AG04449 (cell line): ENCODE measurements at regions of chr15 and their contacts with region 1.

Region 1: GRCh38 chr15:32994810-32995424 is 199.6 kb downstream of the FMN1 start:
- DNase-seq: no peak
- H3K4me3 ChIP-seq: no peak overlapping the region
- CTCF ChIP-seq: peak; percentile 22

Region 2: GRCh38 chr15:32657198-32657883 is 337.6 kb before region 1 on chr15:
- CTCF ChIA-PET with region 1: interaction called, 150 read pairs
- POLR2A ChIA-PET with region 1: no interaction called
- DNase-seq: no peak
- H3K4me3 ChIP-seq: no peak overlapping the region
- CTCF ChIP-seq: no peak

Region 3: DNA sequence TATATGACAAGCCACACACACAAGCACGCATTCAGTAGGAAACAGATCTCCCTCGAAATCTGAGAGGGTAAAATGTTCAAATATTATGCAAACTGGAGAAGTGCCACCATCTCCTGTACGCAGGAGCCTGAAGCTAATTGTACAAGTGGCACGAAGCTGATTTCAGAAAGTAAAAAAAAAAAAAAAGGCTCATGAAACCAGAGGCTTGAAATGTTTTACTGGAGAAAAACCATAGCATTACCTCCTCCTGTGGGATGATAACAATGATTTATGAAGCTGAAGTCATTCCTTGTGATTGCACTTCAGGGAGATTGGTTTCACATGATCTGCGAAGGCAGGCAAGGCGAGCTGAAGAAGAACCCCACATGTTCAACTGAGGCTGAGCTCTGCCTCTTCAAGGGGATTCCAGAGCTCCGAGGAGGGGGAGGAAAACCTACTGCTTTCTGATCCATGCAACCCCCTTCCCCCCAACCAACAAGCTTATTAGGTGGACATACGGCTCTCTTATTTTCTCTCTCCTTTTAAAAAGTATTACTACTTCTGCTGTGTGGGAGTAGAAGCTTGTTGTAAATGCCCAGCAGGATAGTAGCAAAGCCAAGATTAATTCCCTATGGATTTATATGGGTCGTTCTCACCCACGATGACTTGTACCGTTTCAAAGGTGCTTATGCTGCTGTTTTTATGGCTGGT is 176.0 kb before region 1 on chr15:
- CTCF ChIA-PET with region 1: interaction called, 18 read pairs
- POLR2A ChIA-PET with region 1: no interaction called
- DNase-seq: peak; percentile 89
- H3K4me3 ChIP-seq: peak overlapping the region; percentile 16; the same call in 1 of the 2 replicates
- CTCF ChIP-seq: no peak

Region 4: DNA sequence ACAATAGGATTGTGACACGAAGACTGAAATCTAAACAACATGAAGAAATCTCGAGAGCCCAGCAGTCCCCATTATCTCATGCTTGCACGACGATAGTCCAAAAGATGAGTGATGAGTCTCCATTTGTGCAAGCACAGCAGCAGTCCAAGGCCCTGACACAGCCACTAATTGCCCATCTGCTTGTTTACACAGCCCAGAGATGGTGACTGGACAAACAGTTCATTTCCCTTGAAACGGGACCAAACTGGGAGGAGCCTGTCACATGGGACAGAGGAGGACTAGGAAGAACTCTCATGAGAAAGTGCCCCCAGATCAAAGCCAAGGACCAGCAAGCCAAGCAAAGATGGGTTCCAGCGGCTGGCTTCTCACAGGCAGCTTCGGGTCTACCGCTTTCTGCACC is 156.1 kb before region 1 on chr15:
- CTCF ChIA-PET with region 1: interaction called, 92 read pairs
- POLR2A ChIA-PET with region 1: interaction called, 3 read pairs
- DNase-seq: peak; percentile 88
- H3K4me3 ChIP-seq: peak overlapping the region; percentile 40
- CTCF ChIP-seq: no peak

Region 5: GRCh38 chr15:32979710-32980109 is 15.2 kb before region 1 on chr15:
- CTCF ChIA-PET with region 1: interaction called, 31 read pairs
- POLR2A ChIA-PET with region 1: no interaction called
- DNase-seq: peak; percentile 95
- H3K4me3 ChIP-seq: peak overlapping the region; percentile 23
- CTCF ChIP-seq: no peak

Region 6: DNA sequence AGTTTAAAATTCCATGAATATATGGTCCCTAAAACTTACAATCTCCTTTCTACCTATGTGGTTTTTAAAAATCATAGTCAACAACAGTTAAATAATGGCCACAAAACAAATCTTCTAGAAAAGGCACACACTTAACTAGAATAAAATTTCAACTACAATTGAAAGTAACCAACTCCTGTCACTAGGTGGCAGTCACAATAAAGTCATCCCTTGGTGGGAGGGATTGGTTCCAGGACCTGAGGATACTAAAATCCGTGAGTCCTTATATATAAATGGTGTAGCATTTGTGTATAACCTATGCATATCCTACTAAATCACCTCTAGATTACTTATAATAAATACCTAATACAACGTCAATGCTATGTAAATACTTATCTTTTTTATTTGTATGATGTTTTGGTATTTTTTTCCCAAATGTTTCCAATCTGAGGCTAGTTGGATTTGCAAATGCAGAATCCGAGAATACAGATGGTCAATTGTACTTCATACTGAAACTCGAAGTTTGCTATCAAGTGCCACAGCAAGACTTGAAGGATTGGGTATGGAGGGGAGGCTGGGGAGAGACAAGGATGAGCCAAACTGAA is 27.0 kb after region 1 on chr15:
- CTCF ChIA-PET with region 1: interaction called, 11 read pairs
- POLR2A ChIA-PET with region 1: no interaction called
- DNase-seq: no peak
- H3K4me3 ChIP-seq: no peak overlapping the region
- CTCF ChIP-seq: peak; percentile 58